Spleen (tissue), 13 donors: ENCODE measurements at regions of chr5 and their contacts with region 1.

Region 1: DNA sequence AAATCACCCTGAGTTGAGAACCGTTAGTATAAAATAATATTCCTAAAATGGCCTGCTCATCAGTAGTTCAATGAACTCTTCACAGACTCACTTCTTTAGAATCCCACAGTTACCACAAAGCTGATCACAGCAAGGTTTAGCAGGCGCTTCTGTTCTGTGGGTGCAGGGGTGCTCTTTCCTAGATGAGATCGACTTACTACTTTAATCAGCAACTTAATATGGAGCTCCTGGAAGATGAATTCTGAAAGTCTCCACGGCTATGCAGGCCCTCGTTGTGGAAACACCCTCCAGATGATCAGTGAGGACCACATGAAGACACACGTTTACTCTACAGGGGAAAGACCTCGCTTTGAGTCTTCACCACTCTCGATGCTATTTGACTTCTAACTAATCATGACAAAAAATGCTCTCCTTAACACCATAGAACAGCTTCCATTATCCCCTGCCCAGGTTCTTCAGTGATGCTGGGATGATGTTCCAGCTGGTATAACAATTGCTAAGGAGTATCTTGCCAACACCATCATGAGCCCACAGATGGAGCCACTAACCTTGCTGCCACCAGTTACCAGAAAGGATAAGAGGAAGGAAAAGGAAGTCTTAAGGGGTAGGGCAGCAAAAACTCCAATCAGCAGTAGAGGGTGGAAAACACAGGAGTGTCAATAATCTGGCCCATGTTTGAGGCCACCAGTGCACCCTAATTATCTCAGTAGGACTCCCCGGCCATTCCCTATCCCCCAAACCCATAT is 17.9 kb upstream of the GPX8 start:
- DNase-seq: no peak
- H3K4me3 ChIP-seq: no peak overlapping the region
- H3K27ac ChIP-seq: no peak overlapping the region
- H3K4me1 ChIP-seq: peaks cover 0 to 9% (median 2%) of the 10 kb centered on the region in 6 donors
- H3K27me3 ChIP-seq: peaks cover 0 to 17% (median 0%) of the 10 kb centered on the region in 7 donors
- CTCF ChIP-seq: no peak
- POLR2A ChIP-seq: no peak

Region 2: GRCh38 chr5:54944364-54944763 is 197.8 kb before region 1 on chr5:
- intact Hi-C with region 1: loop called (anchors 5 kb)
- DNase-seq: no peak
- H3K4me3 ChIP-seq: no peak overlapping the region
- H3K27ac ChIP-seq: no peak overlapping the region
- H3K4me1 ChIP-seq: no peaks in the 10 kb centered on the region
- H3K27me3 ChIP-seq: no peaks in the 10 kb centered on the region
- CTCF ChIP-seq: peak; percentile 12 to 72 (median 44)
- POLR2A ChIP-seq: no peak

Region 3: GRCh38 chr5:55626790-55627189 is 484.7 kb after region 1 on chr5:
- intact Hi-C with region 1: no loop called
- DNase-seq: no peak
- H3K4me3 ChIP-seq: no peak overlapping the region
- H3K27ac ChIP-seq: peak overlapping the region in 2 of 8 donors; percentile 1 to 35
- H3K4me1 ChIP-seq: no peaks in the 10 kb centered on the region
- H3K27me3 ChIP-seq: no peaks in the 10 kb centered on the region
- CTCF ChIP-seq: no peak
- POLR2A ChIP-seq: no peak